ENCODE measurements at regions of chr11 and their contacts with region 1.

Region 1: GRCh38 chr11:111557425-111558111 is 17.0 kb downstream of the LAYN start:
- DNase-seq: peak; percentile 99
- ATAC-seq: peak; percentile 78
- H3K4me3 ChIP-seq: no peak overlapping the region
- H3K27ac ChIP-seq: peak overlapping the region; percentile 100
- H3K4me1 ChIP-seq: peaks cover 47% of the 10 kb centered on the region
- H3K27me3 ChIP-seq: no peaks in the 10 kb centered on the region
- CTCF ChIP-seq: peak; percentile 18; the same call in 1 of the 2 replicates
- POLR2A ChIP-seq: no peak; the same call in 1 of the 2 replicates
- RAD21 ChIP-seq: no peak; the same call in 1 of the 2 replicates

Region 2: DNA sequence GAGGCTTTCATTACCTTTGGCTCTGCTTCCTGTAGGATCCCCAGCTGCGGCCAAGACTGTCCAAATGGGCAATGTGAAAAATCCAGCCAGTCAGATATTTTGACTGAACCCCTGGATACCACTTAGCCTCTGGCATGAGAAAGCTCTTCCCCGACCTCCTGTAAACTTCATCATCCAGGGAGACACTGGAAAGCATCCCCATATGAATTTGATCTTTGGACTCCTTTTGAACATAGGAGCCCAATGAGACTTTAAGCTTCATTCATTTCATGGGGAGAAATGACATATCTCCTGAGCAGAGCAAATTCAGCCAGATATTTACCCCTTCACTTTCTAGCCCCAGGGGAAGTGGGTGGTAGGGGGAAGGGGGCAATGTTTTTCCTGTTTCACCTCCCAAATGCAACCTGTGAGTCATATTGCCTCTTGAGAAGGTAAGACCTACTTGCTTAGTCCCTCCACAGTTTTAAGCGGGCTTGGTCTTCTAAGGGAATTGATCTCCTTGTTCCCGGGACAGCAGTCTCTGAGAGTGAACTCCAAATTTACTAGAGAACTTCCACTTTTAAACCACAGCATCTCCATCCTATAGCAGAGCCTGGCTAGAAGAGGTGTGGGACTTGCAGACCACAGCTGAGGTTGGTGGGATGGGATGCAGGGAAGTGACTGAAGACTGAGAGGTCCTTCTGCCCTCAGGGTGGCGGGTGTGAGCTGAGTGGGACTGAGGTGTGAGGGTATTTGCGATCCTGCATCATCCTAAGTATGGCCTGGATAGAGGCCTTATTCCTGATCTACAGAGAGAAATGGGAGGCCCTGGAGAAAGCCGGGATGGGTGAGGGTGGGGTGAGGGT is 158.2 kb before region 1 on chr11:
- CTCF ChIA-PET with region 1: no interaction called
- POLR2A ChIA-PET with region 1: no interaction called
- dilution Hi-C with region 1: no loop called
- in situ Hi-C with region 1: no loop called
- intact Hi-C with region 1: no loop called
- DNase-seq: no peak
- ATAC-seq: no peak
- H3K4me3 ChIP-seq: no peak overlapping the region
- H3K27ac ChIP-seq: no peak overlapping the region
- H3K4me1 ChIP-seq: no peaks in the 10 kb centered on the region
- H3K27me3 ChIP-seq: peaks cover 32% of the 10 kb centered on the region
- CTCF ChIP-seq: no peak
- POLR2A ChIP-seq: no peak
- RAD21 ChIP-seq: no peak

Region 3: GRCh38 chr11:111540114-111540936 is 17.2 kb before region 1 on chr11 and contains the start of gene LAYN:
- CTCF ChIA-PET with region 1: no interaction called
- POLR2A ChIA-PET with region 1: no interaction called
- dilution Hi-C with region 1: no loop called
- in situ Hi-C with region 1: no loop called
- intact Hi-C with region 1: loop called (anchors 1 kb)
- DNase-seq: peak; percentile 62
- ATAC-seq: peak; percentile 81
- H3K4me3 ChIP-seq: peak within 1 kb of the TSS; percentile 85
- H3K27ac ChIP-seq: peak within 1 kb of the TSS; percentile 91
- H3K4me1 ChIP-seq: peaks cover 17% of the 10 kb centered on the region
- H3K27me3 ChIP-seq: no peaks in the 10 kb centered on the region
- CTCF ChIP-seq: no peak
- POLR2A ChIP-seq: peak; percentile 79
- RAD21 ChIP-seq: no peak
- total RNA-seq, gene LAYN: 92.5 and 111 TPM in 2 replicates

Measured in IMR-90 (cell line).